OCI-LY7 (cell line): ENCODE measurements at regions of chr12 and their contacts with region 1.

Region 1: DNA sequence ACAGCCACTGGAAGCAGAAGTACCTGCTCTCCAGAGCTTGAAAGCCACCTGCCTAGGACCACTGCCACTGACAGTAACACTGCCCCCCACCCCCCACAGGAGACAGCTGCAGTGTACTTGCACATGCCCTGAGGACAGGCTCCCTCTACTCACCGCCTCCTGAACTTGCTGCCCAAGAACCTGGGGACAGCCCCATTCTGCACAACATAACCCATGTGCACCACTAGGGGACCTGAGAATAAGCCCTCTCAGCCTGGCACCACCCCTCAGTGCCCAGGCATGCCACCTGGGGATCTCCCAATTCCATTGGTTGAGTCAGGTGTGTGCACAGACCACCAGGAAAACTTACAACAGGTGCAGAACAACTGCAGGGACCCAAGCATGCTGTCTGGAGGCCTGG is 67.1 kb upstream of the KIF21A start:
- DNase-seq: no peak
- H3K4me3 ChIP-seq: no peak overlapping the region
- H3K27ac ChIP-seq: no peak overlapping the region
- H3K4me1 ChIP-seq: no peaks in the 10 kb centered on the region
- CTCF ChIP-seq: no peak

Region 2: DNA sequence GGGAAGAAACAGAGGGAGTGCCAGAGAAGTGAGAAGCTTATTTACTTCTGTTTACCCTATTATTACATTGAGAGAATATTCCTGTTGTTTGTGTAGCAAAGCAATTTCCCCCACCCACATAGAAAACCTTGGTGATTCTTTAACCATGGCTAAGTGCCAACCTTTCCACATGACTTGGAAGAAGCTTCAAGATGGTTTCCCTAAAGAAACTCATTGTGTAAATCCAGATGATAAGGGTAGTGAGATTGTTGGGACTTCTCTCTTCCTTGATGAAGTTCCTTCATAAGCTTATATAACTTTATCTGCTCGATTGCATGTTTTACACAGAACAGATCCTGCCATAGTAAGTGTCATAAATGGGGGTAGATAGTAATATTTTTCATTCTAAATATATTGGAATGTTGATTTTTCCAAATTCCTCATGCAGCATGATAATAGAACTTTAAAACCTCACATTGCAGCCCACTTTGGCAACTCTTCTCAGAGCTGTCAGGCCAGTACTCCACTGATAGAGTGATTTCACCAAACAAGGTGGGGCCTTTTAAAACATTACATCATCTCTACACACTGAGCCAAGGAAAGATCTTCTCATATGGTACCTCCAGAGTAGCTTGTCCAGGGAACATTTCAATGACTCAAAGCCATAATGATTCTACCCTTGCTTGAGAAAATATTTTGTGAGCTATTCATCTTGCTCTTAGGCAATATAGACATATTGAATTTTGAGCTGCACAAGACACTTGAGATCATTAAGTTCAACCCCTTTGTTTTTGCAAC is 19.3 kb before region 1 on chr12:
- CTCF ChIA-PET with region 1: no interaction called
- POLR2A ChIA-PET with region 1: no interaction called
- intact Hi-C with region 1: loop called (anchors 1 kb)
- DNase-seq: no peak
- H3K4me3 ChIP-seq: no peak overlapping the region
- H3K27ac ChIP-seq: no peak overlapping the region
- H3K4me1 ChIP-seq: no peaks in the 10 kb centered on the region
- CTCF ChIP-seq: no peak

Region 3: DNA sequence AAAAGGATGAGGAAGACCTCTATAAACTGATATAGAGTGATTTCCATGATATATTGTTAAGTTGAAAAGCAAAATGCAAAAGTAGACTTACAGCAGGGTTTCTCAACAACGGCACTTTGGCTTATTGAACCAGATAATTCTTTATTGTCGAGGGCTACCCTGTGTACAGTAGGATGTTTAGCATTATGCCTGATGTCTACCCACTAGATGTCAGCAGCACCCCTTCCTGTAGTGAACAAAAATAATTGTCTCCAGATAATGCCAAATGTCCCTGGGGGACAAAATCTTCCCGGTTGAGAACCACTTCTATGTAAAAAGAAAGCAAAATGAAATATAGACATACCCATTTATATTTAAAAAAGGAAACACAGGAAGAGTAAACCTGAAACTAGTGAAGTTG is 77.2 kb after region 1 on chr12:
- CTCF ChIA-PET with region 1: interaction called, 14 read pairs
- POLR2A ChIA-PET with region 1: no interaction called
- intact Hi-C with region 1: no loop called
- DNase-seq: peak; percentile 35
- H3K4me3 ChIP-seq: no peak overlapping the region
- H3K27ac ChIP-seq: no peak overlapping the region
- H3K4me1 ChIP-seq: no peaks in the 10 kb centered on the region
- CTCF ChIP-seq: peak; percentile 77